Activated T-helper 2 cell treated with anti-CD3 and anti-CD28 coated beads, Interferon-gamma antibody, Interleukin-2, Interleukin-4, amounts not matched to agents 10 μg/mL and 5 μg/mL and 100 μg/mL, durations not matched to agents 14 hours and 24 hours and 36 hours (primary cell): ENCODE measurements at regions of chr7 and their contacts with region 1.

Region 1: GRCh38 chr7:117008883-117009531 is 55.7 kb downstream of the ST7 start:
- DNase-seq: peak; percentile 37
- H3K4me3 Mint-ChIP-seq: no peak overlapping the region
- H3K27ac Mint-ChIP-seq: peak overlapping the region; percentile 30
- H3K4me1 Mint-ChIP-seq: peaks cover 59% of the 10 kb centered on the region
- H3K27me3 Mint-ChIP-seq: peaks cover 18% of the 10 kb centered on the region

Region 2: GRCh38 chr7:116929914-116930913 is 78.8 kb before region 1 on chr7:
- intact Hi-C with region 1: loop called (anchors 2 kb)
- DNase-seq: peak; percentile 54
- H3K4me3 Mint-ChIP-seq: no peak overlapping the region
- H3K27ac Mint-ChIP-seq: no peak overlapping the region
- H3K4me1 Mint-ChIP-seq: peaks cover 1% of the 10 kb centered on the region
- H3K27me3 Mint-ChIP-seq: peaks cover 10% of the 10 kb centered on the region

Region 3: GRCh38 chr7:116942504-116942903 is 66.5 kb before region 1 on chr7:
- intact Hi-C with region 1: no loop called
- DNase-seq: no peak
- H3K4me3 Mint-ChIP-seq: no peak overlapping the region
- H3K27ac Mint-ChIP-seq: no peak overlapping the region
- H3K4me1 Mint-ChIP-seq: peaks cover 3% of the 10 kb centered on the region
- H3K27me3 Mint-ChIP-seq: peaks cover 31% of the 10 kb centered on the region

Region 4: GRCh38 chr7:116953727-116954442 is 55.1 kb before region 1 on chr7:
- intact Hi-C with region 1: loop called (anchors 1 kb)
- DNase-seq: no peak
- H3K4me3 Mint-ChIP-seq: peak overlapping the region; percentile 94
- H3K27ac Mint-ChIP-seq: peak overlapping the region; percentile 89
- H3K4me1 Mint-ChIP-seq: peaks cover 31% of the 10 kb centered on the region
- H3K27me3 Mint-ChIP-seq: peaks cover 8% of the 10 kb centered on the region

Region 5: GRCh38 chr7:117085769-117086463 is 76.9 kb after region 1 on chr7:
- intact Hi-C with region 1: loop called (anchors 2 kb)
- DNase-seq: no peak
- H3K4me3 Mint-ChIP-seq: no peak overlapping the region
- H3K27ac Mint-ChIP-seq: no peak overlapping the region
- H3K4me1 Mint-ChIP-seq: peaks cover 16% of the 10 kb centered on the region
- H3K27me3 Mint-ChIP-seq: peaks cover 1% of the 10 kb centered on the region

Region 6: GRCh38 chr7:117110480-117111337 is 101.7 kb after region 1 on chr7:
- intact Hi-C with region 1: loop called (anchors 1 kb)
- DNase-seq: peak; percentile 18
- H3K4me3 Mint-ChIP-seq: no peak overlapping the region
- H3K27ac Mint-ChIP-seq: peak overlapping the region; percentile 19
- H3K4me1 Mint-ChIP-seq: peaks cover 35% of the 10 kb centered on the region
- H3K27me3 Mint-ChIP-seq: peaks cover 5% of the 10 kb centered on the region

Region 7: GRCh38 chr7:117127585-117128168 is 118.7 kb after region 1 on chr7:
- intact Hi-C with region 1: loop called (anchors 1 kb)
- DNase-seq: no peak
- H3K4me3 Mint-ChIP-seq: no peak overlapping the region
- H3K27ac Mint-ChIP-seq: no peak overlapping the region
- H3K4me1 Mint-ChIP-seq: peaks cover 22% of the 10 kb centered on the region
- H3K27me3 Mint-ChIP-seq: peaks cover 2% of the 10 kb centered on the region